ENCODE measurements at regions of chr11 and their contacts with region 1.

Region 1: GRCh38 chr11:95067039-95067840 is 521 bp downstream of the SRSF8 start:
- DNase-seq: peak; percentile 91 to 96
- ATAC-seq: peak; percentile 90
- H3K4me3 ChIP-seq: peak overlapping the region; percentile 71 to 76
- H3K27ac ChIP-seq: peak overlapping the region; percentile 76 to 97
- H3K4me1 ChIP-seq: no peaks in the 10 kb centered on the region
- H3K27me3 ChIP-seq: no peaks in the 10 kb centered on the region

Region 2: GRCh38 chr11:94973099-94973968 is 93.9 kb before region 1 on chr11 and contains the starts of genes CWC15 and KDM4D:
- intact Hi-C with region 1: loop called (anchors 10 kb)
- DNase-seq: peak; percentile 97 to 98
- ATAC-seq: peak; percentile 99
- H3K4me3 ChIP-seq: peak within 1 kb of the TSS; percentile 71 to 96
- H3K27ac ChIP-seq: peak within 1 kb of the TSS in 1 of 2 donors; percentile 70
- H3K4me1 ChIP-seq: no peaks in the 10 kb centered on the region
- H3K27me3 ChIP-seq: no peaks in the 10 kb centered on the region
- total RNA-seq, gene CWC15: 49.7 to 54.7 TPM
- total RNA-seq, gene KDM4D: 0.45 to 0.75 TPM

Region 3: DNA sequence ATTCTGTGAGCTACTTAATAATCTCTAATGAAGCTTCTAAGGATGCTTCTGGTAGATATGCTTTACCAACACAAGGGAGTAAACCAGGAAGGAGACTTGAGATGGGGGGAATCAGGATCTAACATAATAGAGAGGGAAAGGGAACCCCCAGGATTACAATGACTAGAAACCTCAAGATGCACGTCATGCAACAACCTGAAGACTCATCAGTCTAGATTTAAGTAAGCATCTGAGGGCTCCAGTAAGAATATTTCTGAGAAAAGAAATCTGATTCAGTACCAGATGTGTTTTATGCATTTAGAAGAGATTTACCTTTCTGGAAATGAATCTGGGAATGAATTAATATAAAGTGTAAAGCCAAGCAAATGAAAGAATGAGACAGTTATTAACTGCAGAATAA is 78.5 kb before region 1 on chr11:
- intact Hi-C with region 1: no loop called
- DNase-seq: no peak
- ATAC-seq: no peak
- H3K4me3 ChIP-seq: no peak overlapping the region
- H3K27ac ChIP-seq: no peak overlapping the region
- H3K4me1 ChIP-seq: no peaks in the 10 kb centered on the region
- H3K27me3 ChIP-seq: no peaks in the 10 kb centered on the region

Region 4: DNA sequence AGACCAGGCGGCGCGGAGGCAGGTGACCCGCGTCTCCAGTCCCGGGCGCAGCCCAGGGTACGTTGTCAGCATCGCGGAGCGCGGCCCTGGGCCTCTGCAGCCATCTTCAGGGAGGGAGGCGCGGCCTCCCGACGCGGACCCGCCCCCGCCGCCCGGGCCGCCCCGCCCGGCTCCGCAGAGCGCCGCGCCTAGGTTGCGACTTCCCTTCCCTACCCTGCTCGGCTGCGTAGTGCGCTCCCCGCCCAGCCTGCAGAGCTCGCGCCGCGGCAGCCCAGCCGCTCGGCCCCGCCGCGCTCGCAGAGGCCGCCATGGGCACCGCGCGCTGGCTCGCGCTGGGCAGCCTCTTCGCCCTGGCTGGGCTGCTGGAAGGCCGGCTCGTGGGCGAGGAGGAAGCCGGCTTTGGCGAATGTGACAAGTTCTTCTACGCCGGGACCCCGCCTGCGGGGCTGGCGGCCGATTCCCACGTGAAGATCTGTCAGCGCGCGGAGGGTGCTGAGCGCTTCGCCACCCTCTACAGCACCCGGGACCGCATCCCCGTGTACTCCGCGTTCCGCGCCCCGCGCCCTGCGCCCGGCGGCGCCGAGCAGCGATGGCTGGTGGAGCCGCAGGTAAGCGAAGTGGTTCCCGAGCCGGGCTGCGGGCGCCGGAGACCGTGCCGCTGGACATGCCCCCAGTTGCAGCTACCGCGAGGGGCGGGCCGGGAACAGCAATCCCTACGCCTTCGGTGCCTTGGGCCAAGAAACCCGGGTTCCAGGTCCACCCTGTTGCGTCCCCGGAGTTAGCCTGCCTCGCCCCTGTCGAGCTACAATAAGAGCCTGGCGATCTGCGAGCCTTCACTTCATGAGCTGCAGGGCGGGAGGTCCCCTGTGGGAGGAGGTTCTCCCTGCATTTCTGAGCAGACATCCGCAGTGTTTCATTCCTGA is 22.6 kb after region 1 on chr11 and contains the start of gene ENDOD1:
- intact Hi-C with region 1: loop called in 1 of 2 experiments (anchors 2 kb)
- DNase-seq: peak; percentile 91 to 95
- ATAC-seq: peak; percentile 97
- H3K4me3 ChIP-seq: peak within 1 kb of the TSS; percentile 78 to 84
- H3K27ac ChIP-seq: peak within 1 kb of the TSS in 1 of 2 donors; percentile 84
- H3K4me1 ChIP-seq: no peaks in the 10 kb centered on the region
- H3K27me3 ChIP-seq: no peaks in the 10 kb centered on the region
- total RNA-seq, gene ENDOD1: 50.9 to 54.8 TPM

Region 5: DNA sequence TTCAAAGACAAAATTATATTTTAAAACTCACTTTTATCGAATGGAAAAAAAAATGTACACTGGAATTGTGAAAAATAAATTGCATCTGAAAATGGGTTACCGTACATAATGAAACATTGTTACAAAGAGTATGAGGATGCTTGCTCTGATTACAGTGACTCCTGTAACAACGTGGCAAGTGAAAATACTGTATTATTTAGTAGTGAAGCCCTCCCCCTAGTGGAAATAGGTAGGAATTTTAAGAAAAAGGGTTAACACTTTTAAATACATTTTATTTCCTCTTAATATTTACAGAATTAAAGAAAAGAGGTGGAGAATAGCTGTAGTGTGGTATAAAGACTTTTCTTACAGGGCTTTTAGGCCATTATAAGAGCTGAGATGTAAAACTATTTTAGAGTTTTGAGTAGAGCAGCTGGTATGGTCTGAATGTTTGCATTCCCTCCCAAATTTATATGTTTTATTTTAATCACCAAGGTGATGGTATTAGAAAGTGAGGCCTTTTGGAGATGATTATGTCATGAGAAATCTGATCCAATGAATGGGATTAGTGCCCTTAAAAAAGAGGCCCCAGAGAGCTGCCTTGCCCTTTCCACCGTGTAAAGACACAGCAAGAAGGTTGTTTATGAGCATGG is 697.1 kb after region 1 on chr11:
- intact Hi-C with region 1: loop called (anchors 5 to 10 kb)
- DNase-seq: no peak
- ATAC-seq: no peak
- H3K4me3 ChIP-seq: no peak overlapping the region
- H3K27ac ChIP-seq: no peak overlapping the region
- H3K4me1 ChIP-seq: no peaks in the 10 kb centered on the region
- H3K27me3 ChIP-seq: no peaks in the 10 kb centered on the region